GM12878 (cell line): ENCODE measurements at regions of chr16 and their contacts with region 1.

Region 1: DNA sequence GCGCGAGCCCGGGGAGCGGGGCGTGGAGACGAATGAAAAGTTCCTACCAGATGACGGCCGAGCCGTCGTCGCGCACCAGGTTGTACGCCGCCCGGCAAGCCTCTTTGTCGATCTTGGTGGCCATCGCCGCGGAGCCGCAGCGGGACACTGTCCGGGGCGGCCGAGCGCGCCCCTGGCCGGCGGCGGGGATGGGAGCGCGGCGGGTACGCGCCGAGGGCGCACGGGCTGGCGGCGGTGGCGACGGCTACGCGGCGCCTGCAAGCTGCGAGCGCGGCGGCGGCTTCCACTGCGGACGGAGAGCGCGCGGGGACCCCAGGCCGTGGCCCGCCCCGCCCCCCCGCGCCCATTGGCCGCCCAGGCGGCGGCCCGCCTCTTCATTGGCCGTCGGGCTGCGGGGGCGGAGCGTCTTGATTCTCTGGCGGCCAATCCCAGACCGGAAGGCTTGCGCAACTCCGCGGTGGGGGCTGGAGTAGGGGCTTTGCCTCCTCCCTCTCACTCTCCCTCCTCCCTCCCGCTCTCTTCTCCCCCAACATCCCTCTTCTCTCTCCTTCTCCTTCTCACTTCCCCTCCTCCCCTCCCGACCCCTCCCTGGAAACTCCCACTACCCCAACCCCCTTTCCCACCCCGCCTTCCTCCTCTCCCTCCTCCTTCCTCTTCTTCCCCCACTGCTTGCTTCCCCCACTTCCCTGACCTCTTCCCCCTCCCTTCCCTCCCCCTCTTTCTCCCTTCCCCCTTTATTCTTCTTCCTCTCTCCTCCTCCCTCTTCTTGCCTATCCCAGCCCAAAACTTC is at the start of gene COTL1:
- DNase-seq: no peak
- ATAC-seq: peak; percentile 76
- H3K4me3 ChIP-seq: peak within 1 kb of the TSS; percentile 99
- H3K27ac ChIP-seq: peak within 1 kb of the TSS; percentile 78
- H3K4me1 ChIP-seq: peaks cover 42% of the 10 kb centered on the region
- H3K27me3 ChIP-seq: no peaks in the 10 kb centered on the region
- CTCF ChIP-seq: no peak
- EP300 ChIP-seq: no peak
- POLR2A ChIP-seq: peak; percentile 85
- RAD21 ChIP-seq: no peak
- polyA plus RNA-seq, gene COTL1: 140 to 235 TPM

Region 2: GRCh38 chr16:84459941-84460405 is 158.0 kb before region 1 on chr16:
- CTCF ChIA-PET with region 1: no interaction called
- POLR2A ChIA-PET with region 1: no interaction called
- RAD21 ChIA-PET with region 1: no interaction called
- SMC1A ChIA-PET with region 1: no interaction called
- in situ Hi-C with region 1: no loop called
- intact Hi-C with region 1: no loop called
- DNase-seq: no peak
- ATAC-seq: no peak
- H3K4me3 ChIP-seq: no peak overlapping the region
- H3K27ac ChIP-seq: no peak overlapping the region
- H3K4me1 ChIP-seq: no peaks in the 10 kb centered on the region
- H3K27me3 ChIP-seq: no peaks in the 10 kb centered on the region
- CTCF ChIP-seq: no peak
- EP300 ChIP-seq: no peak
- POLR2A ChIP-seq: no peak
- RAD21 ChIP-seq: no peak

Region 3: GRCh38 chr16:84511180-84511824 is 106.7 kb before region 1 on chr16:
- CTCF ChIA-PET with region 1: interaction called, 299 read pairs
- POLR2A ChIA-PET with region 1: interaction called, 8 read pairs
- RAD21 ChIA-PET with region 1: interaction called, 194 read pairs
- SMC1A ChIA-PET with region 1: interaction called, 119 read pairs
- in situ Hi-C with region 1: loop called (anchors 5 kb)
- intact Hi-C with region 1: loop called (anchors 1 kb)
- DNase-seq: peak; percentile 62
- ATAC-seq: peak; percentile 37
- H3K4me3 ChIP-seq: no peak overlapping the region
- H3K27ac ChIP-seq: peak overlapping the region; percentile 63
- H3K4me1 ChIP-seq: peaks cover 64% of the 10 kb centered on the region
- H3K27me3 ChIP-seq: no peaks in the 10 kb centered on the region
- CTCF ChIP-seq: peak; percentile 93 to 96 (median 94)
- EP300 ChIP-seq: no peak
- POLR2A ChIP-seq: no peak
- RAD21 ChIP-seq: peak; percentile 96

Region 4: DNA sequence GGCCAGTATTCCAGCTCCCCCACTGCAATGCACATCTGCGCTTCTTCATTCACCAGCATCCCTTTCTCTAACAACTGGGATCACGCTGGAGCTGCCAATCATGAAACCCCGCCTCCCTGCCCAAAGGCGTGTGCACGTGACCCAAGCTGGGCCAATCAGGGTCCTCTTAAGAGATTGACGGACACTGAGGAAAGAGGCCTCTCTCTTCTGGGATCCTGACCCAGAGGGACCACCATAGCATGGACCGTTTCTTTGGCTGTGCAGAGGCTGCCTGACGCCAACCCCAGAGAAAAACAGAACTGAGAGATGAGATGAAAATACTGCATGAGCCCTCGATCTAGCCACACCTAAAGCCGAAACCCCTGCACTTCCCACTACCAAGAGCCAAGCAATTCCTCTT is 32.1 kb before region 1 on chr16:
- CTCF ChIA-PET with region 1: interaction called, 17 read pairs
- POLR2A ChIA-PET with region 1: interaction called, 6 read pairs
- RAD21 ChIA-PET with region 1: interaction called, 5 read pairs
- SMC1A ChIA-PET with region 1: interaction called, 14 read pairs
- in situ Hi-C with region 1: no loop called
- intact Hi-C with region 1: no loop called
- DNase-seq: no peak
- ATAC-seq: peak; percentile 96
- H3K4me3 ChIP-seq: peak overlapping the region; percentile 45; the same call in 1 of the 2 replicates
- H3K27ac ChIP-seq: peak overlapping the region; percentile 24
- H3K4me1 ChIP-seq: peaks cover 19% of the 10 kb centered on the region
- H3K27me3 ChIP-seq: no peaks in the 10 kb centered on the region
- CTCF ChIP-seq: no peak
- EP300 ChIP-seq: no peak
- POLR2A ChIP-seq: peak; percentile 53; the same call in 1 of the 2 replicates
- RAD21 ChIP-seq: no peak

Region 5: DNA sequence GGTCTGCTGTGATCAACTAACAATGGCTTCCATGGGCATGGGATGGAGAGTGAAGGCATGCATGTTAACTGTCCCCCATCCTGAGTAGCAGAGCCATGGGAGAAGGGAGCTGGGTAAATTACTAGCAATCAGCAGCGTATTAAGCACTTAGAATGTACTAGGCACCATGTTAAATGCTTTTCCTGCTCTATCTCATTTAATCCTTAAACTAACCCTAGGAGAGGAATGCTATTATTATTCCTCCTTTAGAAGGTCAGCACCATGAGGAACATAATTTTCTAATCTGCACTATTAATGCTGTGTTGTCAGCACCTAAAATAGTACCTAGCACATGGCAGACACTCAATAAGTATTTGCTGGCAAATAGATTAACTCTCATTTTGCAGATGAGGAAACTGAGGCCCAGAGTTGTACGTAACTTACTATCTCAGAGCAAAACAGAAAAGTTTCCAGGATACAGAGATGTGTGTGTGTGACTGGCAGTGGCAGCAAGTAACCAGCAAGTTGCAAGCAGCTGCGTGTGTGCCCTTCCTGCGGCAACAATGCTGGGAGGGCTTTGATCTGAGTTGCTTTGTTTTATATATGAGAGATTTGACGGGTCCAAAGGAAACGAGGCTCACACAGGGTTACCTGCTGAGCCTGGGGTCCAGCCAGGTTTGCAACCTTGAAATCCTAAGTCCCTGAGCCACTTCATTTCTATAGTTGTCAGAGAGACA is 23.8 kb after region 1 on chr16:
- CTCF ChIA-PET with region 1: interaction called, 16 read pairs
- POLR2A ChIA-PET with region 1: no interaction called
- RAD21 ChIA-PET with region 1: interaction called, 5 read pairs
- SMC1A ChIA-PET with region 1: interaction called, 13 read pairs
- in situ Hi-C with region 1: no loop called
- intact Hi-C with region 1: no loop called
- DNase-seq: no peak
- ATAC-seq: no peak
- H3K4me3 ChIP-seq: peak overlapping the region; percentile 24; the same call in 1 of the 2 replicates
- H3K27ac ChIP-seq: peak overlapping the region; percentile 60
- H3K4me1 ChIP-seq: peaks cover 47% of the 10 kb centered on the region
- H3K27me3 ChIP-seq: no peaks in the 10 kb centered on the region
- CTCF ChIP-seq: no peak
- EP300 ChIP-seq: no peak
- POLR2A ChIP-seq: no peak
- RAD21 ChIP-seq: no peak

Region 6: DNA sequence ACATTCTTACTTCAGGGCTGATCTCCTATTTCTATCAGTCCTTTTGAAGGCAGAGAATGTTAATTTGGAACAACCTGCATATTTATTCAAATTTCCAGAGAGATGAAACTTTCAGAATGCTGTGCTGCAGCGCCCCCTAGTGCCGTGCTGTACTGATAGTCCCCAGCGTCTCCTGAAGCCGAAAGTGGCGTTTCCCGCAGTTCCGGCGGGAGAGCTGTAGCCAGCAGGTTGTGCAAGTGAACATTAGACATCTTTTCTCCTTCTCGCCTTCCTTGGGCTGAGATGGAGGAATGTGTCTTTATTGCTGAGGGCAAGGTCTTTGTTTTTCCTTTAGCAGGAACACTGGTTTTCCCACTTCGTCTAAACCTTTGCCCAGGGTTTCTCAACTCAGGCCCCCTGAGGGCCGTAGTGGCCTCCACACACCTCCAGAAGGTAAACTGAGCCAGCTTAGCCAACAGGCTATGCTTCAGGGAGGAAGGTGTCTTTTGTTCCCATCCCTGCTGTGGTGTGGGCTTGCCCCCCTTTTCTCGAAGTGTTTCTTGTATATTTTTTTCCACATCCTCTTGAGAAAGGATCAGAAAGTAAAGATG is 108.2 kb after region 1 on chr16:
- CTCF ChIA-PET with region 1: interaction called, 158 read pairs
- POLR2A ChIA-PET with region 1: interaction called, 4 read pairs
- RAD21 ChIA-PET with region 1: interaction called, 67 read pairs
- SMC1A ChIA-PET with region 1: interaction called, 88 read pairs
- in situ Hi-C with region 1: loop called (anchors 5 kb)
- intact Hi-C with region 1: loop called (anchors 1 kb)
- DNase-seq: no peak
- ATAC-seq: peak; percentile 66
- H3K4me3 ChIP-seq: peak overlapping the region; percentile 66
- H3K27ac ChIP-seq: peak overlapping the region; percentile 66
- H3K4me1 ChIP-seq: peaks cover 44% of the 10 kb centered on the region
- H3K27me3 ChIP-seq: no peaks in the 10 kb centered on the region
- CTCF ChIP-seq: peak; percentile 90 to 96 (median 91)
- EP300 ChIP-seq: 0 out of 4 replicates have a peak, but pooled peaks of 1 of the 2 experiments have one; percentile 18
- POLR2A ChIP-seq: peak; percentile 32; the same call in 1 of the 2 replicates
- RAD21 ChIP-seq: peak; percentile 84

Region 7: DNA sequence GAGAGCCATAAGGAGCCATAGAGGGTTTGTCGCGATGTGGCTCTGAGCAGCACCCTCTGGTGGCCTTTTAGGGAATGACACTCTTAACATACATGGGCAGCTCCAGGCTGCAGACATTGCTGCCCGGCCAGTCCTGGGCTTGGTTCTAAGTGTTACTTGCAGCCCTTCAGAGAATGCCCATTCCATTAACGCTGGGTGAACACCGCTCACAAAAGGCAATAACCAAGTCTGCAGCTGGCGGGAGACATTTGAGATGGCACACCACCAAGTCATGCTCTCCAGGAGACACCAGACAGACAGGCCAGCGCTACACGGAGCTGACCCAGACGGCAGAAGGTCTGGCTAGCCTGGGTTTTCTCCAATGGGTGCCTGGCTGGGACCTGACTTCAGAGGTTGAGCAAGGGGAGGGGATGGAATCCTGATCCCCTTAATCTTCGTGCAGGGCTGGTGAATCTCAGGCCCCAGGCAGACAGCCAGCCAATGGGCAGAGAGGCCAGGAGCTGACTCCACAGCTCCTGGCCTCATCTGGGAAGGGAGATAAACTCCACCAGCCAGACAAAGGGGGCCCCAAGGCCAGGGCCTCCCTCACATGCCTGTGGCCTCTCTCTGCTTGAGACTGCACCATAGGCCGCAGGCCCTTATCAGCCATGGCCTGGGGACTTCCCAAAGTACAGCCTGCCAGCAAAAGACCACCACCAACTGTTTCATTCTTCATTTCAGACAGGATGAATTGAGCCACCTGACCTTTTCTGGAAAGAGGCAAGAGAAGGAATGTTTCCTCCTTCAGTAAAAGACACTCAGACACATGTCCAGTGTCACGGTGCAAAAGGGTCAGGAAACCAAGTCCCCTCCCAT is 334.6 kb after region 1 on chr16:
- CTCF ChIA-PET with region 1: interaction called, 14 read pairs
- POLR2A ChIA-PET with region 1: no interaction called
- RAD21 ChIA-PET with region 1: interaction called, 4 read pairs
- SMC1A ChIA-PET with region 1: interaction called, 8 read pairs
- in situ Hi-C with region 1: no loop called
- intact Hi-C with region 1: loop called (anchors 1 kb)
- DNase-seq: peak; percentile 40
- ATAC-seq: peak; percentile 94
- H3K4me3 ChIP-seq: no peak overlapping the region
- H3K27ac ChIP-seq: no peak overlapping the region
- H3K4me1 ChIP-seq: peaks cover 4% of the 10 kb centered on the region; the same call in 1 of the 2 replicates
- H3K27me3 ChIP-seq: no peaks in the 10 kb centered on the region; a peak in 1 of 4 replicates
- CTCF ChIP-seq: peak; percentile 85
- EP300 ChIP-seq: no peak
- POLR2A ChIP-seq: no peak
- RAD21 ChIP-seq: peak; percentile 58